ENCODE measurements at regions of chr2 and their contacts with region 1.

Region 1: GRCh38 chr2:233982421-233983121 is 65.4 kb downstream of the TRPM8 start:
- DNase-seq: no peak
- ATAC-seq: peak in 1 of 4 donors; percentile 6
- H3K4me3 ChIP-seq: peak overlapping the region; percentile 7 to 58 (median 36)
- H3K27ac ChIP-seq: peak overlapping the region; percentile 48 to 75 (median 60)
- H3K4me1 ChIP-seq: peaks cover 0 to 36% (median 5%) of the 10 kb centered on the region in 4 donors
- H3K27me3 ChIP-seq: no peaks in the 10 kb centered on the region
- CTCF ChIP-seq: no peak
- POLR2A ChIP-seq: no peak

Region 2: GRCh38 chr2:234019888-234020287 is 37.3 kb after region 1 on chr2:
- intact Hi-C with region 1: no loop called
- DNase-seq: no peak
- ATAC-seq: no peak
- H3K4me3 ChIP-seq: no peak overlapping the region
- H3K27ac ChIP-seq: no peak overlapping the region
- H3K4me1 ChIP-seq: peaks cover 0 to 4% (median 2%) of the 10 kb centered on the region in 4 donors
- H3K27me3 ChIP-seq: no peaks in the 10 kb centered on the region
- CTCF ChIP-seq: no peak
- POLR2A ChIP-seq: no peak

Region 3: DNA sequence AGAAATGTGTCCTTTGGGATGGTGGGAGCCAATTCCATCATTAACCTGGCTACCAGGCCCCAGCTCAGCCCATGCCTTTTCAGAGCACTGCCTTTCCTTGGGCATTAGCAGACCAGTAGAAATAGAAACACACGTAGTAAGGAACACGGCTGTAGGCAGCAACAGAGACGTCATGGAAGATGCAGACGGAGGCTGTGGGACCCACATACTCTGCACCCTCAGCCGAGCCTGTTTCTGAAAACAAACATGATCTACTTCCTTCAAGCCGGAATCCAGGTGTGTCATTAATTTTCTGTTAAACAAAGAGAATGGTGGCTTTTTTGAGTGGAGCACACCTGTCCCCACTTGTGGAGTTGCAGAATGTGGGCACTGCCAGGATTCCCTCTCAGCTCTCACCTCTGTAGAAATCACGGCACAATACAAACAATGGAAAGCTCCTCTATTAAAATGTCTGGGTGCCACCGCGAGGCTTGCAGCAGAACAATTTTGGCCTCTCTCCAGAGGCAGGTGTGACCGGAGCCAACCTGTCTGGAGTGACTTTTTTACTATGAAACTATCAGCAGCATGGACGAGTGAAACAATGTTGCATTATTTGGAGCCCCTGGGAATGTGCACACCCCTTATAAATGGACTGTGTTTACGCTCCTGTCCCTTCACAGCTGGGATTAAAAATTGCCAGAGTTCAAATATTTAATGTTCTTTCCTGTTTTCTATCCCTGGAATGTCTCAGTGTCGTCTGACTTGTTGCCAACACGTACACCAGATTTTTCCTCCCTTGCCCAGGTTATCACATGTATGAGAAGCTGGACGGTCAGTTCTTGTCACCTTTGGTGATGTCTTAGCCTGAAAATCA is 99.6 kb after region 1 on chr2:
- intact Hi-C with region 1: loop called in 1 of 2 experiments (anchors 10 kb)
- DNase-seq: peak; percentile 69 to 91 (median 81)
- ATAC-seq: peak; percentile 93 to 97 (median 94)
- H3K4me3 ChIP-seq: peak overlapping the region in 1 of 3 donors; percentile 6
- H3K27ac ChIP-seq: peak overlapping the region; percentile 59 to 74 (median 60)
- H3K4me1 ChIP-seq: peaks cover 0 to 21% (median 9%) of the 10 kb centered on the region in 4 donors
- H3K27me3 ChIP-seq: no peaks in the 10 kb centered on the region
- CTCF ChIP-seq: peak in 2 of 4 donors; percentile 31 to 43
- POLR2A ChIP-seq: no peak

Measured in right lobe of liver (tissue), 6 donors.